ENCODE measurements at regions of chr17 and their contacts with region 1.

Region 1: DNA sequence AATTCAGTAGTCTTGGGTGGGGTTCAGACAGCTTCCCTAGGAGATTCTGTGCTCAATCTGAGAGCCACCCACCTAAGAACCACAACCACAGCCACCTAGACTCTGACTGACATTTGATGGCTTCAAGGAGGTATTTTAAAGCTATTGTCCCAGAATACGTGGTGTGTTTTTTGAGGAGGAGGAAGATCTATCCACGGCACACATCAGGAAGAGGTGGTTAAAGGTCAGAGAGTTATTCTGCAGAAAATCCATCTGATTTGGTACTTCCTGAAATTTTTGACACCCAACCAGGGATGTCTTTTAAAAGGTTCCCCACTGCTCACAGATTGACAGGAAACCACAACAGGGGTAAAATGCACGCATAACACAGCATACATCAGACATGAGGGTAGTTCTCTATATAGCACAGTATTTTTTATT is 25.1 kb downstream of the SMARCE1 start:
- DNase-seq: peak in 3 of 14 experiments; percentile 56 to 71 (median 69)
- ATAC-seq: peak; percentile 65
- H3K4me3 ChIP-seq: no peak overlapping the region
- H3K4me3 Mint-ChIP-seq: peak overlapping the region; percentile 71
- H3K27ac ChIP-seq: peak overlapping the region in 1 of 2 donors; percentile 31
- H3K27ac Mint-ChIP-seq: peak overlapping the region; percentile 70
- H3K4me1 ChIP-seq: peaks cover 29% of the 10 kb centered on the region
- H3K4me1 Mint-ChIP-seq: peaks cover 54% of the 10 kb centered on the region
- H3K27me3 ChIP-seq: no peaks in the 10 kb centered on the region
- H3K27me3 Mint-ChIP-seq: no peaks in the 10 kb centered on the region
- CTCF ChIP-seq: no peak

Region 2: DNA sequence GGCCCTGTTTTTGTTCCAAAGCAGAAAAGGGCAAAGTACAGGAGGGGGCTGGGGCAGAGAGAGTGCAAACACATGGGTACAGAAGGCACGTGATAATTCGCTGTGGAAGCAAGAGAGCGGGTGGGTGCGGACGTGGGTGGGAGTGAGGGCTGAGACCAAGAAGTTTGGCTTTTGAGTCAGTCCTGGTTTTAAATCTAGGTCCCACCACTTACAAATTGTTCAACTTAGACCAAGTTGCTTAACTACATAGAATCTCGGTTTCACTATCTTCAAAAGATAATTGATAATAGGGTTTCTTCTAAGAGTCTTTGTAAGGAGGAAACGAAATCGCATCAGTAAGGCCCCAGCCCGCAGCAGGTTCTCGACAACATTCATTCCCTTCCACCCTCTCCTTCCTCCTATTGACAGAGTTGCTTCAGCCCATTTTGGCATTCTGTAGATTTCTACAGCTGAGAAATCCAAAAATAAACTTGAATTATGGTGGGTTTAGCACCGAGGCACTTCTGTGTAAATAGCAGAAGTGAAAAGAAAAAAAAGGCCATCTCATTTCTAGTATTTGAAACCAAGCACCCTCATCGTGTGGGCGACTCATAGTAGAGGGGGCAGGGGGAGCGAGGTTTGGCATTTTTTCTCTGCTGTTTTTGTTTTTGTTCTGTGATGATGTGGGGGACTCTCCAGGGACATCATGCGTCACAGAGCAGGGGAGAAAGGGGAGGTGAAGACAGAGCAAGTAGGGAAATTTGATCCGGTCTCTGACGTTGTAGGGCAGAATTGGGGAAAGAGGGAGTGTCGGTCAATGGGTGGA is 23.7 kb before region 1 on chr17:
- CTCF ChIA-PET with region 1: interaction called, 12 read pairs
- POLR2A ChIA-PET with region 1: interaction called, 145 read pairs
- intact Hi-C with region 1: no loop called
- DNase-seq: peak in 13 of 14 experiments; percentile 38 to 94 (median 65)
- ATAC-seq: peak; percentile 47
- H3K4me3 ChIP-seq: peak overlapping the region; percentile 24
- H3K4me3 Mint-ChIP-seq: peak overlapping the region; percentile 71
- H3K27ac ChIP-seq: peak overlapping the region; percentile 95 to 99
- H3K27ac Mint-ChIP-seq: peak overlapping the region; percentile 98
- H3K4me1 ChIP-seq: peaks cover 78% of the 10 kb centered on the region
- H3K4me1 Mint-ChIP-seq: peaks cover 95% of the 10 kb centered on the region
- H3K27me3 ChIP-seq: no peaks in the 10 kb centered on the region
- H3K27me3 Mint-ChIP-seq: no peaks in the 10 kb centered on the region
- CTCF ChIP-seq: no peak

Region 3: DNA sequence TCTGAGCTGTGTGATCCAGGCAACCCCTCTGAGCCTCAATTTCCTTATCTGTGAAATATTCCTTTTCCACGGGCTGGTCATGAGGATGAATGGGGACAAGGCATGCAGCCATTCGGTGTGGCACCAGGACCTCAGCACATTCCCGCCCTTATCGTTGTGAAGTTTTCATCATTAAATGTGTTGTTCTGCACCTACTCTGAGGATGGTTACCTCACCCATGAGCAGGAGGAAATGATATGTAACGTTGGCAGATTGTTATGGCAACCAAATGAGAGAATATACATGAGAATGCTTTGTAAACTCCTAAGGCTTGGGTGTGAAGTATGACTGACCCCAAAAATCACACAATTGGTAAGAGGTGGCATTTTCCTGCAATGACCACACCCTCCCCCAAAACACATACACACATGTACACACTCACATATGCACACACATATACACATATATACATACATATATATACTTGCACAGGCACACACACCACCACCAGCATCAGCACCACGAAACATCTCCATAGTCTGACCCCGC is 14.4 kb before region 1 on chr17:
- CTCF ChIA-PET with region 1: interaction called, 12 read pairs
- POLR2A ChIA-PET with region 1: interaction called, 145 read pairs
- intact Hi-C with region 1: loop called in 1 of 2 experiments (anchors 1 kb)
- DNase-seq: peak in 7 of 14 experiments; percentile 37 to 92 (median 52)
- ATAC-seq: peak; percentile 55
- H3K4me3 ChIP-seq: peak overlapping the region; percentile 17
- H3K4me3 Mint-ChIP-seq: peak overlapping the region; percentile 73
- H3K27ac ChIP-seq: peak overlapping the region; percentile 97 to 99
- H3K27ac Mint-ChIP-seq: peak overlapping the region; percentile 98
- H3K4me1 ChIP-seq: peaks cover 97% of the 10 kb centered on the region
- H3K4me1 Mint-ChIP-seq: peaks cover 95% of the 10 kb centered on the region
- H3K27me3 ChIP-seq: no peaks in the 10 kb centered on the region
- H3K27me3 Mint-ChIP-seq: no peaks in the 10 kb centered on the region
- CTCF ChIP-seq: no peak

Region 4: DNA sequence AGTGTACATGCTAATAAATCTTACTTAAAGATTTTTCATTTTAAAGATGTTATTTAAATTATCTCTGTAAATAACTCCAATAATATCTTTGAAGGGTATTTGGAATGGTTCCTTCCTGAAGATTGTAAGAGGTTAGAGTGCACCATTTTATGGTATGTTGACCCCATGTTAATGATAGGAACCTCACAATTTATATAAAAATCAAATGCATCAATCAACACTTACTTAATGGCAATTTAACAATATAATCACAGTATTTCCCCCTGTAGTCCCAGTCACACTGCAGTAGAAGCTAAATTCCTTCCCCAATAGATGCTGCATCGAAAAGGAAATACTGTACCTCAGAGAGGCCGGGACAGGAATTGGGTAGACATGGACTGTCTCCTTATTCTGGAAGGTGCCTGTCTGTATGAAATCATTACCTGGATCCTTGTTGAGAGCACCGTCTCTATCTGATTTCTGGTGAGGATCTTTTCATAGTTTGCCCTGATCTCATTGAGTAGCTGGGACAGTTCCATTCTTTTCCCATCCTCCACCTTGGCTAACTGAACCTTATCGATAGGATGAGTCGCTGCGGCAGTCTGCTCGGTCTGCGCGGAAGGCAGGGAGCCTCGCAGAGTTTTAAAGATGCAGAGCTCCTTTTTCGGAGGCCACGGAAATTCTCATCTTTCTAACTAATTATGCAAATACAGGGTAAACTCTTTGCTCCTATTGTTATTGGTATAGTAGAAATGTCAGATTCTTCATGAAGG is 42.2 kb after region 1 on chr17 and contains the start of gene KRT222:
- CTCF ChIA-PET with region 1: no interaction called
- POLR2A ChIA-PET with region 1: no interaction called
- intact Hi-C with region 1: loop called in 1 of 2 experiments (anchors 5 kb)
- DNase-seq: peak in 1 of 14 experiments; percentile 3
- ATAC-seq: no peak
- H3K4me3 ChIP-seq: no peak within 1 kb of the TSS
- H3K4me3 Mint-ChIP-seq: no peak within 1 kb of the TSS
- H3K27ac ChIP-seq: no peak within 1 kb of the TSS
- H3K27ac Mint-ChIP-seq: no peak within 1 kb of the TSS
- H3K4me1 ChIP-seq: peaks cover 5% of the 10 kb centered on the region
- H3K4me1 Mint-ChIP-seq: peaks cover 11% of the 10 kb centered on the region
- H3K27me3 ChIP-seq: peaks cover 7 to 20% of the 10 kb centered on the region in 2 experiments
- H3K27me3 Mint-ChIP-seq: peaks cover 41% of the 10 kb centered on the region
- CTCF ChIP-seq: no peak
- total RNA-seq, gene KRT222: not detected

Region 5: DNA sequence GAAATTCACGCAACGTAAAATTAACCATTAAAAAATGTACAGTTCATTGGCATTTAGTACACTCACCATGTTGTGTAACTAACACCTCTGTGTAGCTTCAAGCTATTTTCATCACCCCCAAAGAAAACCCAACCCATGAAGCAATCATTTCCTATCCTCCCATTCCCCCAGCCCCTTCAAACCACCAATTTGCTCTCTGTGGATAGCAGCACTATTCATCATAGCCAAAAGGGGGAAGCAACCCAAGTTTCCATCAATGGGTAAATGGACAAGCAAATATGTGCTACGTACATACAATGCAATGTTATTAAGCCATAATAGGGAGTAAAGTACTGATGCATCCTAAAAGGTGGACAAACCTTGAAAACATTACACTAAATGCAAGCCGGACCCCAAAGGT is 53.4 kb after region 1 on chr17:
- CTCF ChIA-PET with region 1: no interaction called
- POLR2A ChIA-PET with region 1: no interaction called
- intact Hi-C with region 1: no loop called
- DNase-seq: no peak
- ATAC-seq: no peak
- H3K4me3 ChIP-seq: no peak overlapping the region
- H3K4me3 Mint-ChIP-seq: no peak overlapping the region
- H3K27ac ChIP-seq: no peak overlapping the region
- H3K27ac Mint-ChIP-seq: no peak overlapping the region
- H3K4me1 ChIP-seq: no peaks in the 10 kb centered on the region
- H3K4me1 Mint-ChIP-seq: no peaks in the 10 kb centered on the region
- H3K27me3 ChIP-seq: peaks cover 4 to 12% of the 10 kb centered on the region in 2 experiments
- H3K27me3 Mint-ChIP-seq: peaks cover 54% of the 10 kb centered on the region
- CTCF ChIP-seq: no peak

Region 6: GRCh38 chr17:40791787-40792436 is 169.4 kb after region 1 on chr17:
- CTCF ChIA-PET with region 1: interaction called, 3 read pairs
- POLR2A ChIA-PET with region 1: no interaction called
- intact Hi-C with region 1: loop called in 1 of 2 experiments (anchors 2 kb)
- DNase-seq: peak in 1 of 14 experiments; percentile 17
- ATAC-seq: no peak
- H3K4me3 ChIP-seq: no peak overlapping the region
- H3K4me3 Mint-ChIP-seq: no peak overlapping the region
- H3K27ac ChIP-seq: no peak overlapping the region
- H3K27ac Mint-ChIP-seq: no peak overlapping the region
- H3K4me1 ChIP-seq: no peaks in the 10 kb centered on the region
- H3K4me1 Mint-ChIP-seq: no peaks in the 10 kb centered on the region
- H3K27me3 ChIP-seq: peaks cover 9 to 17% of the 10 kb centered on the region in 2 experiments
- H3K27me3 Mint-ChIP-seq: peaks cover 39% of the 10 kb centered on the region
- CTCF ChIP-seq: no peak

Region 7: DNA sequence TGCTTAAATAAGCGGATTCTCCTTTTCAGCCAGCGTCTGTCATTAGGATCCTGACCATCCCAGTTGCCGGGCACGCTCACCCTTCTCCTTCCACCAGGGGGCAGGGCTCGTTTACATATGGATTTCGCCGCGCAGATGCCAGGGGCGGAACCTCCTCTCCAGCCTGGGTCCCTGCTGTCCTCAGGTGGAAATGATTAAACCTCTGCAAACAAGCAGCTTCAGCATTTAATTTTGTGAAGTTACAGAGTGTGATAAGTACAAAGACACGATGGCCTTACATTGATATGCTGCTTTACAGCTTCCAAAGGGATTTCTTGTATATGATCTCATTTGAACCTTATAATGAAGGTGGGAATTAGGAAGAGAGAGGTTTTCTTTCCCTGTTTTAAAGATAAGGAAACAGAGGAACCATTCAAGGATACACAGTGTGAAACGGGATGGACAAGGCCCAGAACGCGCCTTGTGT is 181.1 kb after region 1 on chr17:
- CTCF ChIA-PET with region 1: no interaction called
- POLR2A ChIA-PET with region 1: no interaction called
- intact Hi-C with region 1: loop called in 1 of 2 experiments (anchors 5 kb)
- DNase-seq: peak; percentile 51 to 85 (median 66)
- ATAC-seq: peak; percentile 89
- H3K4me3 ChIP-seq: no peak overlapping the region
- H3K4me3 Mint-ChIP-seq: no peak overlapping the region
- H3K27ac ChIP-seq: no peak overlapping the region
- H3K27ac Mint-ChIP-seq: no peak overlapping the region
- H3K4me1 ChIP-seq: no peaks in the 10 kb centered on the region
- H3K4me1 Mint-ChIP-seq: peaks cover 4% of the 10 kb centered on the region
- H3K27me3 ChIP-seq: peaks cover 11 to 58% of the 10 kb centered on the region in 2 experiments
- H3K27me3 Mint-ChIP-seq: peaks cover 54% of the 10 kb centered on the region
- CTCF ChIP-seq: peak; percentile 91

Measured in CD4-positive, alpha-beta T cell (primary cell).